ENCODE measurements at regions of chr22 and their contacts with region 1.

Region 1: GRCh38 chr22:23128269-23129108 is 13.3 kb downstream of the RSPH14 start:
- DNase-seq: peak; percentile 70 to 76 (median 72)
- ATAC-seq: peak; percentile 71 to 95 (median 88)
- H3K4me3 ChIP-seq: no peak overlapping the region
- H3K27ac ChIP-seq: no peak overlapping the region
- H3K4me1 ChIP-seq: peaks cover 0 to 10% (median 3%) of the 10 kb centered on the region in 12 donors
- H3K27me3 ChIP-seq: no peaks in the 10 kb centered on the region
- CTCF ChIP-seq: peak; percentile 67 to 91 (median 80)
- POLR2A ChIP-seq: no peak

Region 2: GRCh38 chr22:22976033-22976922 is 152.2 kb before region 1 on chr22:
- intact Hi-C with region 1: loop called in 1 of 10 experiments (anchors 5 kb)
- DNase-seq: no peak
- ATAC-seq: no peak
- H3K4me3 ChIP-seq: no peak overlapping the region
- H3K27ac ChIP-seq: no peak overlapping the region
- H3K4me1 ChIP-seq: no peaks in the 10 kb centered on the region
- H3K27me3 ChIP-seq: no peaks in the 10 kb centered on the region
- CTCF ChIP-seq: peak in 2 of 12 donors; percentile 14 to 16
- POLR2A ChIP-seq: no peak